ENCODE measurements at regions of chr16 and their contacts with region 1.

Region 1: GRCh38 chr16:84754353-84754856 is 54.6 kb downstream of the USP10 start:
- DNase-seq: peak in 2 of 10 donors; percentile 41 to 47

Region 2: GRCh38 chr16:84446084-84446483 is 308.3 kb before region 1 on chr16:
- intact Hi-C with region 1: no loop called
- DNase-seq: peak in 1 of 10 donors; percentile 6

Region 3: GRCh38 chr16:84726079-84726668 is 28.2 kb before region 1 on chr16:
- intact Hi-C with region 1: no loop called
- DNase-seq: peak; percentile 78 to 97 (median 92)

Region 4: DNA sequence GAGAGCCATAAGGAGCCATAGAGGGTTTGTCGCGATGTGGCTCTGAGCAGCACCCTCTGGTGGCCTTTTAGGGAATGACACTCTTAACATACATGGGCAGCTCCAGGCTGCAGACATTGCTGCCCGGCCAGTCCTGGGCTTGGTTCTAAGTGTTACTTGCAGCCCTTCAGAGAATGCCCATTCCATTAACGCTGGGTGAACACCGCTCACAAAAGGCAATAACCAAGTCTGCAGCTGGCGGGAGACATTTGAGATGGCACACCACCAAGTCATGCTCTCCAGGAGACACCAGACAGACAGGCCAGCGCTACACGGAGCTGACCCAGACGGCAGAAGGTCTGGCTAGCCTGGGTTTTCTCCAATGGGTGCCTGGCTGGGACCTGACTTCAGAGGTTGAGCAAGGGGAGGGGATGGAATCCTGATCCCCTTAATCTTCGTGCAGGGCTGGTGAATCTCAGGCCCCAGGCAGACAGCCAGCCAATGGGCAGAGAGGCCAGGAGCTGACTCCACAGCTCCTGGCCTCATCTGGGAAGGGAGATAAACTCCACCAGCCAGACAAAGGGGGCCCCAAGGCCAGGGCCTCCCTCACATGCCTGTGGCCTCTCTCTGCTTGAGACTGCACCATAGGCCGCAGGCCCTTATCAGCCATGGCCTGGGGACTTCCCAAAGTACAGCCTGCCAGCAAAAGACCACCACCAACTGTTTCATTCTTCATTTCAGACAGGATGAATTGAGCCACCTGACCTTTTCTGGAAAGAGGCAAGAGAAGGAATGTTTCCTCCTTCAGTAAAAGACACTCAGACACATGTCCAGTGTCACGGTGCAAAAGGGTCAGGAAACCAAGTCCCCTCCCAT is 198.2 kb after region 1 on chr16:
- intact Hi-C with region 1: loop called (anchors 1 kb)
- DNase-seq: peak in 9 of 10 donors; percentile 50 to 94 (median 76)

Region 5: GRCh38 chr16:84970447-84971127 is 216.2 kb after region 1 on chr16:
- intact Hi-C with region 1: loop called (anchors 1 kb)
- DNase-seq: peak; percentile 63 to 97 (median 82)

Measured in posterior cingulate gyrus (tissue), 11 donors.